CD4-positive, alpha-beta T cell (primary cell): ENCODE measurements at regions of chr13 and their contacts with region 1.

Region 1: GRCh38 chr13:49110122-49110912 is 109.8 kb upstream of the MLNR start:
- DNase-seq: peak; percentile 33 to 92 (median 62)
- ATAC-seq: peak; percentile 80
- H3K4me3 ChIP-seq: peak overlapping the region; percentile 67
- H3K4me3 Mint-ChIP-seq: peak overlapping the region; percentile 91
- H3K27ac ChIP-seq: no peak overlapping the region
- H3K27ac Mint-ChIP-seq: peak overlapping the region; percentile 85
- H3K4me1 ChIP-seq: peaks cover 5% of the 10 kb centered on the region
- H3K4me1 Mint-ChIP-seq: peaks cover 40% of the 10 kb centered on the region
- H3K27me3 ChIP-seq: no peaks in the 10 kb centered on the region
- H3K27me3 Mint-ChIP-seq: no peaks in the 10 kb centered on the region
- CTCF ChIP-seq: no peak

Region 2: GRCh38 chr13:48950507-48950886 is 159.8 kb before region 1 on chr13:
- CTCF ChIA-PET with region 1: no interaction called
- POLR2A ChIA-PET with region 1: no interaction called
- intact Hi-C with region 1: no loop called
- DNase-seq: no peak
- ATAC-seq: no peak
- H3K4me3 ChIP-seq: no peak overlapping the region
- H3K4me3 Mint-ChIP-seq: no peak overlapping the region
- H3K27ac ChIP-seq: no peak overlapping the region
- H3K27ac Mint-ChIP-seq: no peak overlapping the region
- H3K4me1 ChIP-seq: no peaks in the 10 kb centered on the region
- H3K4me1 Mint-ChIP-seq: no peaks in the 10 kb centered on the region
- H3K27me3 ChIP-seq: no peaks in the 10 kb centered on the region
- H3K27me3 Mint-ChIP-seq: no peaks in the 10 kb centered on the region
- CTCF ChIP-seq: no peak

Region 3: DNA sequence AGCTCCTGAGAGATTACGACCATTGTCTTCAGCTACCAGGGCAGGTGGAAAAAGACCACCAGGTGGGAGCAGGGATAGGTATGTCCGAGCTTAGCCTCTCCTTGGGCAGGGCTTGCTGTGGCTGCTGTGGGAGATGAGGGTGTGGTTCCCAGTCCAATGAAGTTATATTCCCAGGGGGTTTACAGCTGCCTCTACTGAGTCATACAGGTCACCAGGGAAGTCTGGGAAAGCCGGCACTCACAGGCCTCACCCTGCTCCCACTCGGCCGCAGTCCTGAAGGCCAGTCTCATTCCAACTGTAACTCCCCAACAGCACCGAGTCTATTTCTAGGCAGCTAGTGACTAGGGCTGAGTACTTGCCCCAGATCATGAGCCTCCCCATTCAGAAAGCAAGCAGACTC is 57.5 kb before region 1 on chr13:
- CTCF ChIA-PET with region 1: no interaction called
- POLR2A ChIA-PET with region 1: no interaction called
- intact Hi-C with region 1: no loop called
- DNase-seq: no peak
- ATAC-seq: no peak
- H3K4me3 ChIP-seq: no peak overlapping the region
- H3K4me3 Mint-ChIP-seq: no peak overlapping the region
- H3K27ac ChIP-seq: no peak overlapping the region
- H3K27ac Mint-ChIP-seq: no peak overlapping the region
- H3K4me1 ChIP-seq: no peaks in the 10 kb centered on the region
- H3K4me1 Mint-ChIP-seq: peaks cover 44% of the 10 kb centered on the region
- H3K27me3 ChIP-seq: no peaks in the 10 kb centered on the region
- H3K27me3 Mint-ChIP-seq: no peaks in the 10 kb centered on the region
- CTCF ChIP-seq: no peak

Region 4: DNA sequence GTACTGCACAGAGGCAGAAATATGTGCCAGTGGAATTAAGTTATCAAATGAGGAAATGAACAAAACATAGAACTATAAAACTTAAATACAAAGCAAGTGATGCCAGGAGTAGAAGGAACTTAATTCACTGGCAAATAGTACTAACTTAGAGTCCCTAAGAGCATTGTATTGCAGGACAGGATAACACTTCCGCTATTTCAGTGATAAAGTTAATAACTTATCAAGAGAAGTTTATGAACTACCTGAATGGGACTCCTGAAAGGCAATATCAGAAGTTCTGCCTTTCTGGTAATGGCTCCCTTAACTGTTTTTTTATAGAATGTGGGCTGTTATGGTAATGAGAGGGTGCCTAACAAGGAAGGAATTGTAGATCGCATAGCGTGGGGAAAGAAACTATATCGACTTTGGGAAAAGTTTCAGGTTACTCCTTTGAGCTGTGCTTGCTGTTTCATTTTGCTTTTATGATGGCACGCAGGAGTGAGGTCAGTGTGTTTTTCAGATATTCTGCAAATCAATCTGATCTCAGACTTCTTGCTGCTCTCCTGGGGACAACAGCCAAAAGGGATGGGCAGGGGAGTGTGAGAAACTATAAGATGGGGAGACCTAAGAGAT is 14.5 kb after region 1 on chr13:
- CTCF ChIA-PET with region 1: interaction called, 3 read pairs
- POLR2A ChIA-PET with region 1: interaction called, 15 read pairs
- intact Hi-C with region 1: no loop called
- DNase-seq: no peak
- ATAC-seq: no peak
- H3K4me3 ChIP-seq: no peak overlapping the region
- H3K4me3 Mint-ChIP-seq: no peak overlapping the region
- H3K27ac ChIP-seq: no peak overlapping the region
- H3K27ac Mint-ChIP-seq: no peak overlapping the region
- H3K4me1 ChIP-seq: peaks cover 2% of the 10 kb centered on the region
- H3K4me1 Mint-ChIP-seq: peaks cover 18% of the 10 kb centered on the region
- H3K27me3 ChIP-seq: no peaks in the 10 kb centered on the region
- H3K27me3 Mint-ChIP-seq: no peaks in the 10 kb centered on the region
- CTCF ChIP-seq: no peak

Region 5: DNA sequence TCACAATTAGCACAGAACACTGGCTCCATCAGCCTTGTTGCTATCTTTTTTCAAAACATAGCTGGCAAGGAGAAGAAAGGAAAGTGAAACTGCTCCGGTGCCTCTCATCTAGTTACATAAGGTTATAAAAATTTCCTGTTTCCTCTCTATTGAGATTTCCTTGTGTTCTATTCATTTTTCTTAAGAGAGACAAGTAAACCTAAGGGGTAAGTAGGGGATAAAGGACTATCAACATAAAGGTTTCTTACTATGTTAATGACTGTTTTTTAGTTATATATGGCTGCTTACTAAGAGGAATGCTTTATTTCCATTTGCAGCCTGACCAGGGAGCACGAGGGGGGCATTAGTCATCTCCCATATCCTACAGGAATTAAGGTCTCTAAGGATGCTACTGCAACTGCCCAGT is 36.6 kb after region 1 on chr13:
- CTCF ChIA-PET with region 1: no interaction called
- POLR2A ChIA-PET with region 1: interaction called, 18 read pairs
- intact Hi-C with region 1: no loop called
- DNase-seq: peak in 4 of 14 experiments; percentile 26 to 78 (median 70)
- ATAC-seq: peak; percentile 88
- H3K4me3 ChIP-seq: peak overlapping the region; percentile 51
- H3K4me3 Mint-ChIP-seq: peak overlapping the region; percentile 87
- H3K27ac ChIP-seq: peak overlapping the region; percentile 64 to 82
- H3K27ac Mint-ChIP-seq: peak overlapping the region; percentile 90
- H3K4me1 ChIP-seq: peaks cover 9% of the 10 kb centered on the region
- H3K4me1 Mint-ChIP-seq: peaks cover 61% of the 10 kb centered on the region
- H3K27me3 ChIP-seq: no peaks in the 10 kb centered on the region
- H3K27me3 Mint-ChIP-seq: no peaks in the 10 kb centered on the region
- CTCF ChIP-seq: no peak

Region 6: DNA sequence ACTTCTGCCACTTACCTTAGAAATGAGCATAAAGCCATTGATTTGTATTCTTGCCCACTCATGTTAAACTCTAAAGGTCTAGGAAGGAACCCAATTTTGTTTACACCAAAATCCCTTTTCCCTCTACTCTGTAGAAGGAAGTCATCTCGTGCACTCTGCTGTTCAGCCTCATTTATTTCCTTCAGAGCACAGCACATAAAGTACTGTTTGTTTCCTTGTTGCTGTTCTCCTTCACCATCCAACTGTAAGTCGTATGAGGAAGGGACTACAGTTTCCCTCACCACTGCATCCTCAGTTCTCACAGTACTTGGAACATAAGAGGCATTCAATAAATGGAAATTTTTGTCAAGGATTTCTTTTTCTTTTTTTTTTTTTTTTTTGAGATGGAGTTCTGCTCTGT is 162.0 kb after region 1 on chr13:
- CTCF ChIA-PET with region 1: no interaction called
- POLR2A ChIA-PET with region 1: no interaction called
- intact Hi-C with region 1: no loop called
- DNase-seq: no peak
- ATAC-seq: no peak
- H3K4me3 ChIP-seq: no peak overlapping the region
- H3K4me3 Mint-ChIP-seq: no peak overlapping the region
- H3K27ac ChIP-seq: no peak overlapping the region
- H3K27ac Mint-ChIP-seq: no peak overlapping the region
- H3K4me1 ChIP-seq: no peaks in the 10 kb centered on the region
- H3K4me1 Mint-ChIP-seq: no peaks in the 10 kb centered on the region
- H3K27me3 ChIP-seq: no peaks in the 10 kb centered on the region
- H3K27me3 Mint-ChIP-seq: no peaks in the 10 kb centered on the region
- CTCF ChIP-seq: no peak